ENCODE measurements at regions of chr15 and their contacts with region 1.

Region 1: DNA sequence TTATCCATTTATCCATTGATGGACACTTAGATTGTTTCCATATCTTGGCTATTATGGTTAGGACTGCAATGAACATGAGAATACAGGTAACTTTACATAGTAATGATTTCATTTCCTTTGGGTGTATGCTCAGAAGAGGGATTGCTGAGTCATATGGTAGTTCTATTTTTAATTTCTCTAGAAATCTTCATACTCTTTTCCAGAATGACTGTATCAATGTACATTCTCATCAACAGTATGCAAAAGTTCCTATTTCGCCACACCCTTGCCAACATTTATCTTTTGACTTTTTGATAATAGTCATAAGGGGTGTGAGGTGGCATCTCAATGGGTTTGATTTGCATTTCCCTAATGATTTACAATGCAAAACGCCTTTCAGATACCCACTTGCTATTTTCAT is 6.2 kb upstream of the NIPA1 start:
- DNase-seq: no peak
- H3K4me3 Mint-ChIP-seq: no peak overlapping the region
- H3K27ac Mint-ChIP-seq: peak overlapping the region; percentile 62
- H3K4me1 Mint-ChIP-seq: peaks cover 40% of the 10 kb centered on the region
- H3K27me3 Mint-ChIP-seq: no peaks in the 10 kb centered on the region

Region 2: DNA sequence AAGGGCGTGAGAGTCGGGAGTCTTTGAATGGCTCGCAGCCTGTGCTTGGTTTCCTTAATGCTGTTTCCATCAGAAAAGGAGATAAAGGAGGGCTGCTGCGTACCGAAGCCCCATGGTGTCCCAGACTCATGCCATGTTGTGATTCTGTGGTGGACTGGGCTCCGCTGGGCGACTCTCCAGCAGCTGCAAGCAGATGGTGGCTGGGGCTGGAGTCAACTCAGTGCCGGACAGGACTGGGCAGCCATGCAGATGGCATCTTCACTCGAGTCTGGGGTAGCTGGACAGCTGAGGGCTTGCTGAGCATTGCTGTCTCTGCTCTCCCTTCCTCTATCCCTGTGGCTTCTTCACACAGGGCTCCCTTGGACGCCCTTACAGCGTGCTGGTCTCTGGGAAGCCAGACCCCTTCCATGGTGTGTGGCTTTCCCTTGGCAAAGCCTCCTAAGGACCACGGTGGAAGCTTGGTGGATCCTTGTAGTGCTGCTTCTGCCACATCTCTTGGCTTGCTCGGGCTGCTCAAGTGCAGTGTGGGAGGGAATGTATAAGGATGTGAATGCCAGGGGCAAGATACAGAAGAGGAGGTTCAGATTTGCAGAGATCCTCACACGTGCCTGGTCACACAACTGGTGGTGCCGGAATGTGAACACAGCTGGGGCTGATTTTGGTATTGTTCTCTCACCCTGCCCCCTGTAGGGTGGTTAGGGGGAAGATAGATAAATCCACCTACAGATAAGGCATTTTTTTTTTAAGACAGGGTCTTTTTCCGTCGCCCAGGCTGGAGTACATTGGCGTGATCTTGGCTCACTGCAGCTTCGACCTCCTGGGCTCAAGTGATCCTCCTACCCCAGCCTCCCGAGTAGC is 15.2 kb after region 1 on chr15:
- intact Hi-C with region 1: loop called (anchors 2 kb)
- DNase-seq: no peak
- H3K4me3 Mint-ChIP-seq: no peak overlapping the region
- H3K27ac Mint-ChIP-seq: peak overlapping the region; percentile 38
- H3K4me1 Mint-ChIP-seq: peaks cover 32% of the 10 kb centered on the region
- H3K27me3 Mint-ChIP-seq: no peaks in the 10 kb centered on the region